ENCODE measurements at regions of chr3 and their contacts with region 1.

Region 1: GRCh38 chr3:98817547-98818041 is 54.5 kb downstream of the ST3GAL6 start:
- DNase-seq: peak; percentile 45
- CTCF ChIP-seq: peak; percentile 55

Region 2: GRCh38 chr3:98593046-98593936 is 224.3 kb before region 1 on chr3 and contains the start of gene CPOX:
- CTCF ChIA-PET with region 1: interaction called, 269 read pairs
- POLR2A ChIA-PET with region 1: no interaction called
- DNase-seq: peak; percentile 90
- CTCF ChIP-seq: no peak

Region 3: GRCh38 chr3:98846101-98846500 is 28.5 kb after region 1 on chr3:
- CTCF ChIA-PET with region 1: interaction called, 11 read pairs
- POLR2A ChIA-PET with region 1: no interaction called
- DNase-seq: no peak
- CTCF ChIP-seq: no peak

Region 4: GRCh38 chr3:99172736-99173657 is 355.4 kb after region 1 on chr3:
- CTCF ChIA-PET with region 1: interaction called, 10 read pairs
- POLR2A ChIA-PET with region 1: no interaction called
- DNase-seq: peak; percentile 32
- CTCF ChIP-seq: peak; percentile 63

Region 5: DNA sequence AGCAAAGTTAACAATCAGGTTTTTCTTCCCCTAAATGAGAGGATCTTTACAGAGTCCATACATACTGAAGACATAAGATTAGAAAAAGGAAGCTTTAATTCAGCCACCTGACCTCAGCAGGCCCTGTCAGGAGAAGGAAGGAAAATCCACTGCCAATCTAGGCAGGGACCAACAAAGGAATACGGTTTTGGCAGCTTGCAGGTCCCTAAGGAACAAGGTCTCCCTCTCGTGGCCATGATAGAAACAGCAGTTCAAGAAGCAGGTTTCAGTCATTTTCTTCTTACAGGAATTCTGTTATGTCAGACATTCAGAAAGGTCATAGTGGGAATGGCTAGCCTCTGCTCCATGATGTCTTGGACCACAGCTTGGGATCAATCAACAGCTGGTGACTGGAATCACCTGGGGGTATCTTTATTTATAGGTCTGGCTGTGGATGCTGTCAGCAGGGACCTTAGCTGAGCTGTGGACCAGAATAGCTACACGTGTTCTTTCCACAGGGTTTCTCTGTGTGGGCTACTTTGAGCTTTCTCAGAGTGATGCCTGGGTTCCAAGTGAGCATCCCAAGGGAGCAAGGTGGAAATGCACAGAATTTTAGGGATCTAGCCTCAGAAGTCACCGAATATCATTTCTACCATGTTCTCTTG is 990.7 kb after region 1 on chr3:
- CTCF ChIA-PET with region 1: interaction called, 10 read pairs
- POLR2A ChIA-PET with region 1: no interaction called
- DNase-seq: peak; percentile 38
- CTCF ChIP-seq: peak; percentile 70

Measured in GM10248 (cell line).